Left ventricle myocardium superior (tissue), 1 donor: ENCODE measurements at regions of chr6 and their contacts with region 1.

Region 1: DNA sequence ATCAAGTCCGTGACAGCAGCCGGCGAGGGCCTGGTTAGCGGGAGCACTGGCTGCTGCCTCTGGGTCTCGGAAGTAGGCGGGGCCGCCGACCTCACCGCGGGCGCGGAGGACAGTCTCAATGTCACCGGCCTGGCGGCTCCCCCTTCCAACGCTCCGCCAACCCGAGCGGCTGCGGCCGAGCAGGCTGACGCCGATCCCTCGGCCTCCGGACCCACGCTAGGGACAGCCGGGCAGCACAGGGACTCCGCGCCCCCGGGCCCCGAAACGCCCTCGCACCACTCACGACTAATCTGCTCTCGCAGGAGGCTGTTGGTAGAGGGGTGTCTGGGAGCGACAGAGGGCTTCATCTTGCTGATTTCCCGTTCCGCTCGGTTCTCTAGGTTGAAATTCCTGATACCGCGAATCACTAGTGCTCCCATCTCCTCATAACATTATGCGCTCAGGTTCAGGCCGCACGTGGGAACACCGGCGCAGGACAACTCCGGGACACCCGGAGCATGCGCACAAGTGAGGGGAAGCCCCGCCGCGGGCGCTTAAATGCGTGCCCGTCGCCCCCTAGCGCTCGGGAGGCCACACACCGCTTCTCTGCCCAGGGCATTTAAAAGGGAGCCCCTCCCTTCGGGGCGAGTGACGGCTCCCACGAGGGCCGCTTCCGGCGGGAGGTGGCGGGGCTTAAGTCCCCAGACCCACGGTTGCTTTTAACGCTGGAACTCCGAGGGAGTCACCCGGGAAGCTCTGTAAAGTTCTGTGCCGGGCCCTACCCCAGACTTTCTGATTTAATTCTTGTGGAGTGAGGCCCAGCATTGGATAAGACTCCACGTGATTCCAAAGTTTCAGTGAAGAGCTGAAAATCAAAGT is at the start of gene NDUFAF4:
- DNase-seq: peak; percentile 98
- ATAC-seq: peak; percentile 99
- total RNA-seq, gene NDUFAF4: 98.0 TPM

Region 2: DNA sequence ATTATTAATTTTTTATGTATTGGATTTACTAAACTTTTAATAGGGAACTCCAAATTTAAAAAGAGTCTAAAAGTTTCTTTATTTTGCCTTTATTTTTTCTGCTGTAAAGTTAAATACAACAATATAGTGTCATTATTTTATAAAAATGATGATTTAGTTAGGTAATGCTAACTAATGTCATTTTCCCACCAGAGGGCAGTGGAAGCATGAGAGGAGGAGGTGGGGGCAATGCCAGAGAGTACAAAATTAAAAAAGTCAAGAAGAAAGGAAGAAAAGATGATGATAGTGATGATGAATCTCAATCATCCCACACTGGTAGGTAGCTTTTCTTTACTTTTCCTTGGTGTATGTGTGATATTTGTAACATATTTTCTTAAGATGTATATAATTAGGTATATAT is 354.9 kb before region 1 on chr6:
- intact Hi-C with region 1: loop called (anchors 10 kb)
- DNase-seq: no peak
- ATAC-seq: no peak

Region 3: GRCh38 chr6:98039869-98040607 is 1142.4 kb after region 1 on chr6:
- intact Hi-C with region 1: no loop called
- DNase-seq: no peak
- ATAC-seq: no peak